Breast epithelium (tissue), 4 donors: ENCODE measurements at regions of chr11 and their contacts with region 1.

Region 1: GRCh38 chr11:36372101-36372767 is 76.1 kb downstream of the PRR5L start:
- DNase-seq: no peak
- H3K4me3 ChIP-seq: no peak overlapping the region
- H3K27ac ChIP-seq: no peak overlapping the region
- H3K4me1 ChIP-seq: no peaks in the 10 kb centered on the region
- H3K27me3 ChIP-seq: peaks cover 0 to 3% of the 10 kb centered on the region in 2 donors
- CTCF ChIP-seq: no peak
- POLR2A ChIP-seq: no peak

Region 2: GRCh38 chr11:36684840-36685801 is 312.9 kb after region 1 on chr11:
- intact Hi-C with region 1: loop called (anchors 5 kb)
- DNase-seq: no peak
- H3K4me3 ChIP-seq: no peak overlapping the region
- H3K27ac ChIP-seq: no peak overlapping the region
- H3K4me1 ChIP-seq: no peaks in the 10 kb centered on the region
- H3K27me3 ChIP-seq: peaks cover 0 to 8% of the 10 kb centered on the region in 2 donors
- CTCF ChIP-seq: no peak
- POLR2A ChIP-seq: no peak